ENCODE measurements at regions of chr7 and their contacts with region 1.

Region 1: DNA sequence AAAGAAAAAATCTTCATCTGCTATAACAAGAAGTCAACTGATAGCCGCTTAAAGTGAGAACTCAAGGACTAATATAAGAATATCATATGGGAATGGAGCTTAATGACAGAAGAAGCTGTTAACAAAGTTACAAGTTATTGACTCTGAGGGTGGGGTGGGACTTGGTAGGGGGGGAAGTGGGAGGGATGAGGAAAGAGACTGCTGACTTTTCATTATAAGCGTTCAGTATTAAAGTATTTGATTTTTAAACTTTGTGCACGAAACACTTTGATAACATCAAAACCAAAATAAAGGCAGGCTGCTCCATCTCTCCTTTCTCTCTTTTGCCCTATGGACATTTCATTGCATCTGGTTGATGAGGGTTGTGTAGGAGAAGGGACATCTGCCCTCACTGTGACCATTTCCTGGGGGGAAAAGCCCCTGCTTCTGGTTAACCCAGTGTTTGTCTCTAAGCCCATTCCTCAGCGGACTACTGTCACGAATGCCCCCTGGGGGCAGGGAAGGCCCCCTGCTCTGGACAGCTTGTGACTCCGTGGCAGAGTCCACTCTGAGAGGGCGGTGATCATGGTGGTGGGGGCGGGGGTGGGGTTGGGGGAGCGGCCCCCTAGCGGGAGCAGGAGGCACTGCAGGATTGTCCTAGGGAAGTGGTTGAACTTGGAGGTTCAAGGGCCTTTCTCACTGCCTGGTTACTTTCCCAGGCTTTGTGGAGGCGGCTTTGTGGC is 17.4 kb downstream of the SLC13A4 start:
- DNase-seq: peak; percentile 85

Region 2: DNA sequence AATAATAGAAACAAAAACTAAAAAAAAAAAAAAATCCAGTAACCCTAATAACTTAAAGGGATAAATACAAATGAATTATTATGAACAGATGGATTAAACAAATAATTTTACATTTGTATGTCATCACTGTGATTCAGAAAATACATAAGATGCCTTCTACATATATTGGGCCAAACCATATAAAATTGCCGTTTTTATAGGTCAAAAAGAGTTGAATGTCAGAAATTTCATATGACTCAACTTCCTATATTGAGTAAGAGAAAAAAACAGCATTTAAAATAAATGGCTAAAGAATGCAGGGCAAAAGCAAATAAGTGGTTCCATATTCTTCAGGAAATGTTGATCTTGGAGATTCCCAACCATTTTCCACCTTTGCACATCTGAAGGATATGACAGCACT is 1403.3 kb before region 1 on chr7:
- CTCF ChIA-PET with region 1: no interaction called
- POLR2A ChIA-PET with region 1: no interaction called
- DNase-seq: no peak

Region 3: DNA sequence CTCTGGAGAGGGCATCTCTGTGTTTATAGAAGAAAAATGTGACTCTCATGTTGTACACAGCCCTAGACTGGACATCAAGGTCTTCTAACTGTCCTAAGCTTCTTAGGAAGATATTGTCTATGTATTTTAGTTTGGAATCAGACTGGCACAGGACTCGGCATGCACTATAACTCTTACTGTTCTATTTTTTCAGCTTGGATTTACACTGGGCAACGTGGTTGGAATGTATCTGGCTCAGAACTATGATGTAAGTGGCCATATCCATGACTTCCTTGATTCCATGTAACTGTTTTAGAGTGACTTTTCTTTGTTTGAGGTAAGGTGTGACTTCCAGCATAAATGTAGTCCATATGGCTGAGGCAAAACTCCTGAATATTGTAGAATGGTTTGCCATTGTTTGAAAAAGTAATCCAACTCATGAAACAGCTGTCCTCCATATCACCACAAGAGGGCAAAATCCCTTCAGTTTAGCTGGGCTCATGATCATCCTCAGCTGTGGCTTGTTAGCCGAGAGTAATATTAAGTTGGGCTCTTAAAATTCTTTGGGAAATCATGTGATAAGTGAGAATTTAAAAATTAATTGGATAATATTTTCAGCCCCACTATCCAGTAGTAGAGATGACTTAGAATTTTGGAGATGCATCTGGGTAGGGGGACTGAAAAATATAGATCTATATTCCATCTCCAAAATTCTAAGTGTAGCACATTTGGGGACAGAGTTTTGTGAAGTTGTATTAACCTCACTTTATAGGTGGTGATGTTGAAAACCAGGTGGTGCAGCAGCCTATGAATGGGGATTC is 37.8 kb before region 1 on chr7:
- CTCF ChIA-PET with region 1: interaction called, 11 read pairs
- POLR2A ChIA-PET with region 1: interaction called, 3 read pairs
- DNase-seq: peak; percentile 81

Region 4: GRCh38 chr7:135801045-135801693 is 90.6 kb after region 1 on chr7:
- CTCF ChIA-PET with region 1: no interaction called
- POLR2A ChIA-PET with region 1: no interaction called
- DNase-seq: peak; percentile 83

Measured in HEK293T (cell line).